ENCODE measurements at regions of chrX and their contacts with region 1.

Region 1: GRCh38 chrX:53621418-53621986 is 65.0 kb downstream of the HUWE1 start:
- H3K4me3 Mint-ChIP-seq: no peak overlapping the region
- H3K27ac Mint-ChIP-seq: no peak overlapping the region
- H3K4me1 Mint-ChIP-seq: no peaks in the 10 kb centered on the region
- H3K27me3 Mint-ChIP-seq: no peaks in the 10 kb centered on the region

Region 2: DNA sequence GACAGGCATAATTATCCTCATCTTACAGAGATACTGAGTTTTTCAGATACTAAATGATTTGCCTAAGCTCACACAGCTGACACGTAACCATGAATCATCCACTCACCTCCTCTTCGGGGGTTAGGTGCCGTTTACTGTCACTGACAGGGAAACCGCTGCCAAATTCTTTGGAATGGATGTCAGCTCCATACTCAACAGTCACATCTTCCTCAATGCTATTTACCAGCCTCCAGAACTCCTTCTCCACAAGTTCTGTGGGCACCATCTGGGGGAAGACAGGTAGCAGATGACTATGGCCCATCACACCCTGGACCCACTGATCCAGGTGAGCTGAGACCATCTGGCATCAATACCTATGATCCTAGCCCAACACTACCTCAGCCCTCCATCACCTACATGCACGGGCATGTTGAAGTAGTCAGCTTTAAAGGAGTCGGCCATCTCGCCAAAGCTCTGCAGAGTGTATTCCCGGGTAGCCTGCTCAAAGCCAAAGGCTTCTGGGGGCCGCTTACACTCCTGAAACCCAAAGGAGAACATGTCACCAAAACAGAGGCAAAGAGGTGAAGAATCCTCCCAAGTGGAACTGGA is 410.0 kb before region 1 on chrX:
- intact Hi-C with region 1: loop called (anchors 10 kb)
- H3K4me3 Mint-ChIP-seq: no peak overlapping the region
- H3K27ac Mint-ChIP-seq: no peak overlapping the region
- H3K4me1 Mint-ChIP-seq: no peaks in the 10 kb centered on the region
- H3K27me3 Mint-ChIP-seq: no peaks in the 10 kb centered on the region

Region 3: DNA sequence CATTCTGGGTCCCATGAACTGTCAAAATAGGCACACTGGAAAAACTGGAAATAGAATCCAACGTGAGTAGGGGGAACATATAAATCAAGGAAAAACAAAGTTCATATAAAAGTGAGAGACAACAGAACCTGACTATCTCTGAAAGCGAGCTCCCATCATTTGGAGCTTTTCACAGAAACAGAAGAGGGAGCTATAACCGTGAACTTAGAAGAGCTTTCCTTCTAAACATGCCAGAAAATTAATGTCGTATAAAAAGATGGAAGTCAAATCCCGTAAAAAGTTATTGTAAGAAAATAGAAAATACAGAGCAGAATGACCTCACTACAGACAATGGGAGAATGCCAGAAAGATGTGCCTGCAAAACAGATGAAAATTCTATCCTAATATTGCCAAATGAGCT is 163.4 kb before region 1 on chrX:
- intact Hi-C with region 1: no loop called
- H3K4me3 Mint-ChIP-seq: no peak overlapping the region
- H3K27ac Mint-ChIP-seq: no peak overlapping the region
- H3K4me1 Mint-ChIP-seq: peaks cover 14% of the 10 kb centered on the region
- H3K27me3 Mint-ChIP-seq: no peaks in the 10 kb centered on the region

Region 4: DNA sequence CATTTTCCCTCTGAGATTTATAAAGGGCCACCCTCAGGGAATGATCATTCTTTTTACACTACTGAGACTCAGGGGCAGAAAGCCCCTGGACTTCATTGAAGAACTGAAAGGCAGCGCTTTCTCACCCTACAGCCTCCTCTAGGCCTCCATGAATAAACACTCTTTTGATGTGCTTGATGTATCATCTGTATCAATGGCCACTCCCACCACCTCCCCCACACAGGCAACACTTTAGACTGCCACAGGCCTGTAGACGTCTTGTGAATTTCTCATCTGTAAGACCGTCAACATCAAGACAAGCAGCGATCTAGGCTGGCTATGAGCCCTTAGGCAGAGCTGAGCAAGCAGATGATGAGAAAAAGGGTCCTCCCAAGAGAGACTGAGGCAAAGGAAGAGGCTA is 58.2 kb before region 1 on chrX:
- intact Hi-C with region 1: loop called (anchors 10 kb)
- H3K4me3 Mint-ChIP-seq: no peak overlapping the region
- H3K27ac Mint-ChIP-seq: no peak overlapping the region
- H3K4me1 Mint-ChIP-seq: no peaks in the 10 kb centered on the region
- H3K27me3 Mint-ChIP-seq: no peaks in the 10 kb centered on the region

Measured in dendritic cell treated with granulocyte-macrophage colony-stimulating factor and Interleukin-4, amounts not matched to agents 40 ng/mL and 50 ng/mL, for 4 days (primary cell).